PC-9 (cell line): ENCODE measurements at regions of chr3 and their contacts with region 1.

Region 1: DNA sequence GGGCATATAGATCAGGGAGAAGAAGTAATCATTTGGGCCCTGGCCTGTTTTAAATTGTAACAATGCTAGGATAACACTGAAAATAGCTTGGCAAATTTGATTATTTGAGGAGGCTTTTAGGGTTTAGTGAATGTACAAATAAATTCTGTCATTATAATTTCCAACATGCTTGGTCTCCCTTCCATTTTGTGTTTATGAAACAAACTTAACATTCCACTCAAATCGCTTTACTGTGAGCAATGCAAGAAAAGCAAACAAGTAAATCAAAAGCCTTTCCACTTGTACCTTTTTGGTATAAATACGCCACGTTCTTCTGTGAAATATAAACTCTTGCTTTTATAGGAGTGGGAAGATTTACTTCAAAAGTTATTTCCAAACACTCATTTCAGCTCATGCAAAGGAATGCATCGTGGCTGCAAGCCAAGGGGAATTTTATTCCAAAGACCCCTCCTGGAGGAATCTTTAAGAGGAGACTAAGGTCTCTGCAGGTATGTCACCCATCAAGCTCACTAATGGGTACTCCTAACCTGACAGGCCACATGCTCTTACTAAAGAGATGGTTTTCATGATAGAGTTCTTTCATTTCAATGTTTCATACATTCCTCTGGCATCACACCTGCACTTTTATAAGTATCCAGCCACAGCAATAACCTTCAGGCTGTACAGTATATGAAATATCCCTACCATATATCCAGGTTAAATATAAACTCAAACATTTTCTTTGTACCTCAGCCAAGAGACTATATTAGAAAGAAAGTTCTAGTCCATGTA is 115.2 kb downstream of the P3H2 start:
- DNase-seq: no peak
- H3K4me3 ChIP-seq: no peak overlapping the region
- H3K27ac ChIP-seq: no peak overlapping the region
- H3K4me1 ChIP-seq: peaks cover 20% of the 10 kb centered on the region
- H3K27me3 ChIP-seq: no peaks in the 10 kb centered on the region
- CTCF ChIP-seq: no peak

Region 2: DNA sequence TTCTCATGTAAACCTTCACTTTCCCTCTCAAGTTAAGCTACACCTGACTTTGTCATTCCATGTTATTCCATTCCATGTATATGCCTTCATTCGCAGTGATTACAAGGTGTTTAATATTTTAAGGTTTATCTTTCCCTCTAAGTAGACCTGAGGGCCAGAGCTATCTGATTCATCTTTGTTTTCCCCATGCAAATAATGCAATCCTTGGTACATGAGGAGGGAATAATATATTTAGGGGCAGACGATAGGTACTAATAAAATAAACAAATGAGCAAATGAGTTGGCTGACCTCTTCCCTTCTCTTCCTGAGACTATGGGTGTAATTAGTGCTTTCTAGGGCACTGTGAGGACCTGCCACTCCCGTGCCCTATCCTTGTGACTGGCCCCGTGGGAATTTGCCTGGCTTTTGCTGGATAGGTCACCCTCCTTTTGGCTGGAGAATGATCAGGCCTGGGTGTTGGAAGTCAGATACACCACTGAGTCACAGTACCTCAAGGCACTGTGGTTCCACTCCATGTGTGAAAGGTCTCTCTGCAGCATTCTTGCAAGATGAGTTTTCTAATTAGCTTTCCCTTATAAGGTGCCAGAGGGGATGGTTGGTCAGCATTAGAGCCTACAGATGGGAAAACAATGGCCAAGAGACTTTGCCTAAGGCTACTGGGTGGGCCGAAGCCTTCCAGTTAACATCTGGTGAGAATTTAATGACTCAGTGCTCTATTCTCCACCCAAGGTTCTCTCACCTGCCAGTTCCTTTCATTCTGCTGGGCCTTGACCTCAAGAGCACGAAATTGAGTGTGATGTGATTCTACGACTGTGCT is 68.0 kb before region 1 on chr3:
- CTCF ChIA-PET with region 1: no interaction called
- POLR2A ChIA-PET with region 1: no interaction called
- intact Hi-C with region 1: no loop called
- DNase-seq: peak; percentile 98 to 100
- H3K4me3 ChIP-seq: peak overlapping the region; percentile 10; the same call in 1 of the 2 replicates
- H3K27ac ChIP-seq: peak overlapping the region; percentile 98
- H3K4me1 ChIP-seq: peaks cover 54% of the 10 kb centered on the region
- H3K27me3 ChIP-seq: no peaks in the 10 kb centered on the region
- CTCF ChIP-seq: no peak

Region 3: DNA sequence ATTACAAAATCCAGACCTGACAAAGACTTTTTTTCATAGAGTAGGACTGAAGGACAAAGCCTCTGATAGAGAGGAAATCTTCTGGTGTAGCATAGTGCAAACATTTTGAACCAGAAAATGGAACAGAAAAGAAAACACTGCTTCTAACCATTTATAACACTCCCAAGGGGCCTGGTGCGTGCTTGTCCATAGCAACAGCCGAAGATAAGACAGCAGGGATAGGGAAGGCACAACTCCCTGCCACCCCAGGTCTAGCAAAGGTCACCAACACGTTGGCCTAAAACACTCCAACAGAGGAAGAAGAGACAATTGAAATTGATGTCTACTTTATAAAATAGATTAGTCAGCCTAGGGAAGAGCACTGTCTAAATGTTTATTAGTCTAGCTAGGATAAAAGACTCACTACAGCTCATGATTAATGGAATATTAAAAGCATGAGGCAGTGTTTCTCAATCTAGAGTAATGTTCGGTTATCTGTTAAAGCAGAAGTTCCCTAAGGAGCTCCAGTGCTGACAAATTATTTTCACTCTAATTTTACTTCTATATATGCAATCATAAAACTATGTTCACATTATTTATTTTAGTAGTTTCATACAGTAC is 30.0 kb before region 1 on chr3:
- CTCF ChIA-PET with region 1: no interaction called
- POLR2A ChIA-PET with region 1: interaction called, 10 read pairs
- intact Hi-C with region 1: no loop called
- DNase-seq: no peak
- H3K4me3 ChIP-seq: no peak overlapping the region
- H3K27ac ChIP-seq: no peak overlapping the region
- H3K4me1 ChIP-seq: no peaks in the 10 kb centered on the region
- H3K27me3 ChIP-seq: no peaks in the 10 kb centered on the region
- CTCF ChIP-seq: no peak